Kidney (tissue), 22 donors: ENCODE measurements at regions of chr22 and their contacts with region 1.

Region 1: GRCh38 chr22:24325105-24325757 is 54.6 kb downstream of the SPECC1L start:
- DNase-seq: peak in 3 of 5 donors; percentile 19 to 92 (median 81)
- H3K4me3 ChIP-seq: no peak overlapping the region
- H3K27ac ChIP-seq: no peak overlapping the region
- H3K4me1 ChIP-seq: peaks cover 0 to 2% (median 0%) of the 10 kb centered on the region in 3 donors
- H3K27me3 ChIP-seq: no peaks in the 10 kb centered on the region
- CTCF ChIP-seq: peak; percentile 70

Region 2: DNA sequence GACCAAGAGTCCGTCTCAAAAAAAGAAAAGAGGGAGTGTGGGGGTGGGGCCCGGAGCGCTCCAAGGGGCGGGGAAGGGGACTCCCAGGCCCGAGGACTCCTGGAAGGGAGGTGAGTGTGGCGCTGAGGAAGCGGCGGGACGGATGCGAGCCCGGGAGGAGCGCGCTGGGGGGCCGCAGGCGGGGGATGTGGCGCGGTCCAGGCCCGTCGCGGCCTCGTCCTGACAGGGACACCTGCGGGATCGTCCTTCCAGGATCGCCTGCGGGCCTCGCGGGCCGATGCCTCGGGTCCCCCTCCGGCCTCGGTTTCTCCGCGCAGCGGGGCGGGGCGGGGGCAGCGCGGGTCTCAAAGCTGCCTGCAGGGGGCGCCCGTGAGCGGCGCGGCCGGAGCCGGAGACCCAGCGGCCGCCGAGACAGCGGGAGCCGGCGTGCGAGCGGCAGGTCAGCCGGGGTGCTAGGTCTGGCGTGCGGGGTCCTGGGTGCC is 98.3 kb after region 1 on chr22:
- intact Hi-C with region 1: no loop called
- DNase-seq: peak in 4 of 5 donors; percentile 46 to 73 (median 60)
- H3K4me3 ChIP-seq: peak overlapping the region in 1 of 3 donors; percentile 32
- H3K27ac ChIP-seq: no peak overlapping the region
- H3K4me1 ChIP-seq: peaks cover 0 to 11% (median 0%) of the 10 kb centered on the region in 3 donors
- H3K27me3 ChIP-seq: peaks cover 3% of the 10 kb centered on the region
- CTCF ChIP-seq: peak; percentile 79

Region 3: GRCh38 chr22:24466716-24467328 is 141.6 kb after region 1 on chr22:
- intact Hi-C with region 1: no loop called
- DNase-seq: peak in 3 of 5 donors; percentile 47 to 91 (median 70)
- H3K4me3 ChIP-seq: no peak overlapping the region
- H3K27ac ChIP-seq: peak overlapping the region in 1 of 2 donors; percentile 28
- H3K4me1 ChIP-seq: peaks cover 2 to 26% (median 14%) of the 10 kb centered on the region in 3 donors
- H3K27me3 ChIP-seq: no peaks in the 10 kb centered on the region
- CTCF ChIP-seq: no peak

Region 4: GRCh38 chr22:24525416-24526037 is 200.3 kb after region 1 on chr22:
- intact Hi-C with region 1: loop called (anchors 10 kb)
- DNase-seq: peak; percentile 51 to 86 (median 71)
- H3K4me3 ChIP-seq: no peak overlapping the region
- H3K27ac ChIP-seq: no peak overlapping the region
- H3K4me1 ChIP-seq: peaks cover 0 to 9% (median 0%) of the 10 kb centered on the region in 3 donors
- H3K27me3 ChIP-seq: no peaks in the 10 kb centered on the region
- CTCF ChIP-seq: peak; percentile 80